Right ventricle myocardium inferior (tissue), 1 donor: ENCODE measurements at regions of chr10 and their contacts with region 1.

Region 1: DNA sequence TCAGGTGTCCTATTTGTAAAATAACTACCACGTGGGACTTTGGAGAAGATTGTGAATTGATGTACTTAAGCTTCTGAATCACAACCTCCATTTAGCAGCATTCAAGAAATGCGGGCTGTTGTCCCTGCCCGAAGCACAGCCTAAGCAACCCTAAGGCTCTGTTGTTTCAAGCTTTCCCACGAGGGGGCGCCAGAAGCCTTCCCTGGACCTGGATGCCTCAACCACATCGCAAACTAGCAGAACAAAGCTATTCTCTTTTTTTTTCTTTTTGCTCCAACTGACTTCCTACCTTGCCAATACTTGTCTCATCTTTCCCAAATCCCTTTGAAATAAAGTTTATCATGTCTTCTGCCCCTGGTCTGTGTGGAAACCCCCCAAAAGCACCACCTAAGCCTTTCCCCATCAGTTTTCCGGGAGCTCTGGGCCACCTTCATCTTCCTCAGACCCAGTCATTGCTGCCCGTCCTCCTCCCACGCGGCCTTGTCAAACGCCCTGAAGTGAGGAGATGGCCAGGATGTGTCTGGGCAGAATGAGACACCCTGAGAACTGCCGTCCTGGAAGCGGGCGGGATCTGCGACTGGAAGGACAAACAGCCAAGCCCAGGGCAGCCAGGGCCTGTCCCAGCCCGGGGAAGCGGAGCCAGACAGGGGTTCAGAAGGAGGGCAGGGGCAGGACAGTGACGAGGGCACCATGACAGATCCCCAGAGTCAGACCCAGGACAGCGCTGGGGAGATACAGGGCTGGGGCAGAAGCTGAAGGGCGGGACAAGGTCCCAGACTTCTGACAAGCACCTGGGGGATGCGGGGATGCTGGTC is 112.7 kb downstream of the SLIT1 start:
- DNase-seq: peak; percentile 86
- ATAC-seq: peak; percentile 70

Region 2: DNA sequence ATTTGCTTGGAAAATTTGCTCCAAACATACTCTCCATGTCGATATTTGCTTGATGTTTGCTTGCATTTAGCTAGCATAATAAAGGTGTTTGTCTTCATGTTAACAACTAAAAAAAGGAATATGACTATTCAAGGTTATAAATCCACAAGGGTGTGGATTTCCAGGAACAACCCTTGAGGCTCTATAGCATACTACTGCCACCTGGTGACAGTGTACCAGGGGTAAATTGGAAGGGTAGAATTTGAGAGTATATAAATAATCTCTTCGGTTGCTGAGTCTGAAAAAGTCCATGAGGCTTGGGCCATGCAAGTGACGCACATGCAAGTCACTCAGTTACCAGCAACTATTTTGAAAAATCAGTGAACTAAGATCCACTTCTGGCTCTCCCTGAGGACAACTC is 44.3 kb after region 1 on chr10:
- intact Hi-C with region 1: loop called (anchors 1 kb)
- DNase-seq: no peak
- ATAC-seq: peak; percentile 42

Region 3: GRCh38 chr10:97210543-97210961 is 137.5 kb after region 1 on chr10:
- intact Hi-C with region 1: loop called (anchors 2 kb)
- DNase-seq: no peak
- ATAC-seq: peak; percentile 47